ENCODE measurements at regions of chr11 and their contacts with region 1.

Region 1: GRCh38 chr11:65497141-65498041 is 1.5 kb upstream of the MALAT1 start:
- DNase-seq: peak; percentile 98 to 99
- ATAC-seq: peak; percentile 81 to 95 (median 84)
- H3K4me3 ChIP-seq: peak overlapping the region; percentile 75
- H3K4me3 Mint-ChIP-seq: no peak overlapping the region
- H3K27ac ChIP-seq: peak overlapping the region; percentile 96
- H3K27ac Mint-ChIP-seq: no peak overlapping the region
- H3K4me1 ChIP-seq: peaks cover 40% of the 10 kb centered on the region
- H3K4me1 Mint-ChIP-seq: peaks cover 13 to 17% of the 10 kb centered on the region in 2 donors
- H3K27me3 ChIP-seq: no peaks in the 10 kb centered on the region
- H3K27me3 Mint-ChIP-seq: no peaks in the 10 kb centered on the region
- CTCF ChIP-seq: no peak

Region 2: DNA sequence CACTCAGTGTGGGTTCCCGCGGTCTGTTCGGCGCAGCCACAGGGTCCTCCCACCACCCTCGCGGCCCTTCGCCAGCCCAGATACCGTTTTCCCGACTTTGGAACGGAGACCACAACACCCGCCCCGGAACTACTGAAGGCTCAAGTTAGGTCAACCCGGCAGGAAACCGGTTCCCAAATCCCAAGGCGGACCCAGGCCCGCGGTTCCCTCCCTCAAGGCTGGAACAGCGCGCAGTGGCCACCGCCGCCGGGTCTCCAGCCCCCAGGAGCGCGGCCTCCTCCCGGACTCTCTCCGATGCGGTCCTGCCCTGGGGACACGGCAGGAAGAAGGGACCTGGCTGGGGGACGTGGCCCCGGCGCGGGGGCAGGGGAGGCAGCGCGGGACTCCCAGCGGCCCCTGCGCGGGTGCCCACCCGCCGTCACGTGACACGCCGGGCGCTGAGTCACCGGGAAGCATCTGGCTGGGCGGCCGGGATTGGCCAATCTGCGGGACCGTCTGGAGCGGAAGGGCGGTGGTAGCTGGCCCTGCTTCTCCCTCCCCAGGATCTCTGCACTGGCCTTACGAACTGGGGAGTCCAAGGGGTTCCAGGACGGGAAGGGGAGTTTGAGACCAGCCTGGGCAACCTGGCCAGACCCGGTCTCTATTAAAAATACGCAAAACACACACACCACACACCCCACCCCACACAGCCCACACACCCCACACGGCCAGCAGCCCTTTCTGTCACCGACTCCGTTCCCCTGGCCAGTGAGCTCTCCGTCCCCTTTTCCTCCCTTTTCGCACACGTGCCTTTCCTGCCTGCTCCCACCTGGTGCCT is 20.0 kb before region 1 on chr11:
- intact Hi-C with region 1: loop called (anchors 1 kb)
- DNase-seq: peak; percentile 92
- ATAC-seq: peak; percentile 84 to 94 (median 92)
- H3K4me3 ChIP-seq: peak overlapping the region; percentile 78
- H3K4me3 Mint-ChIP-seq: peak overlapping the region; percentile 98
- H3K27ac ChIP-seq: peak overlapping the region; percentile 95
- H3K27ac Mint-ChIP-seq: peak overlapping the region; percentile 94 to 99
- H3K4me1 ChIP-seq: peaks cover 25% of the 10 kb centered on the region
- H3K4me1 Mint-ChIP-seq: peaks cover 15 to 17% of the 10 kb centered on the region in 2 donors
- H3K27me3 ChIP-seq: no peaks in the 10 kb centered on the region
- H3K27me3 Mint-ChIP-seq: no peaks in the 10 kb centered on the region
- CTCF ChIP-seq: no peak

Measured in natural killer cell (primary cell).